GM12878 (cell line): ENCODE measurements at regions of chr17 and their contacts with region 1.

Region 1: GRCh38 chr17:40417609-40418427 is at the start of gene TOP2A:
- DNase-seq: peak; percentile 99
- ATAC-seq: peak; percentile 97
- H3K4me3 ChIP-seq: peak within 1 kb of the TSS; percentile 94
- H3K27ac ChIP-seq: peak within 1 kb of the TSS; percentile 62
- H3K4me1 ChIP-seq: no peaks in the 10 kb centered on the region; the same call in 1 of the 2 replicates
- H3K27me3 ChIP-seq: no peaks in the 10 kb centered on the region; a peak in 1 of 4 replicates
- CTCF ChIP-seq: no peak
- EP300 ChIP-seq: no peak
- POLR2A ChIP-seq: peak; percentile 91
- RAD21 ChIP-seq: no peak
- polyA plus RNA-seq, gene TOP2A: 149 to 236 TPM

Region 2: DNA sequence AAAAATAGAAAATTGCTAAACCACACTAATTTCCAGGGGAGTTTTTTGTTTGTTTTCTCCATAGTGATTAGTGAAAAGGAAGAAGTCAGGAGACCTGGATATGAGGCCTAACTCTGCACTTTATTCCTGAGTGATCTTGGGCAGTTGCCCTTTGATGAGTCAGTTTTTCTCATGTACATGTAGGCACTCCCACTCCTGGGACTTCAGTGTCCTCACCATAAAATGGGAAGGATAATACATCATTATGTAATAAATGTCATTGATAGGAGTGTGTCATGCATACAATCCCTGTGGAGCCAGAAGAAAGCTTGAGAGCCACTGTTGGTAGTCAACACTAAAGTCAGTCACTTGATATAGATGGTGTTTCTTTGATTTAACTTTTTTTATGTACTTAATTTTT is 166.2 kb before region 1 on chr17:
- CTCF ChIA-PET with region 1: no interaction called
- POLR2A ChIA-PET with region 1: no interaction called
- RAD21 ChIA-PET with region 1: no interaction called
- SMC1A ChIA-PET with region 1: no interaction called
- in situ Hi-C with region 1: no loop called
- intact Hi-C with region 1: no loop called
- DNase-seq: no peak
- ATAC-seq: no peak
- H3K4me3 ChIP-seq: no peak overlapping the region
- H3K27ac ChIP-seq: no peak overlapping the region
- H3K4me1 ChIP-seq: no peaks in the 10 kb centered on the region
- H3K27me3 ChIP-seq: no peaks in the 10 kb centered on the region
- CTCF ChIP-seq: no peak
- EP300 ChIP-seq: no peak
- POLR2A ChIP-seq: no peak
- RAD21 ChIP-seq: no peak

Region 3: DNA sequence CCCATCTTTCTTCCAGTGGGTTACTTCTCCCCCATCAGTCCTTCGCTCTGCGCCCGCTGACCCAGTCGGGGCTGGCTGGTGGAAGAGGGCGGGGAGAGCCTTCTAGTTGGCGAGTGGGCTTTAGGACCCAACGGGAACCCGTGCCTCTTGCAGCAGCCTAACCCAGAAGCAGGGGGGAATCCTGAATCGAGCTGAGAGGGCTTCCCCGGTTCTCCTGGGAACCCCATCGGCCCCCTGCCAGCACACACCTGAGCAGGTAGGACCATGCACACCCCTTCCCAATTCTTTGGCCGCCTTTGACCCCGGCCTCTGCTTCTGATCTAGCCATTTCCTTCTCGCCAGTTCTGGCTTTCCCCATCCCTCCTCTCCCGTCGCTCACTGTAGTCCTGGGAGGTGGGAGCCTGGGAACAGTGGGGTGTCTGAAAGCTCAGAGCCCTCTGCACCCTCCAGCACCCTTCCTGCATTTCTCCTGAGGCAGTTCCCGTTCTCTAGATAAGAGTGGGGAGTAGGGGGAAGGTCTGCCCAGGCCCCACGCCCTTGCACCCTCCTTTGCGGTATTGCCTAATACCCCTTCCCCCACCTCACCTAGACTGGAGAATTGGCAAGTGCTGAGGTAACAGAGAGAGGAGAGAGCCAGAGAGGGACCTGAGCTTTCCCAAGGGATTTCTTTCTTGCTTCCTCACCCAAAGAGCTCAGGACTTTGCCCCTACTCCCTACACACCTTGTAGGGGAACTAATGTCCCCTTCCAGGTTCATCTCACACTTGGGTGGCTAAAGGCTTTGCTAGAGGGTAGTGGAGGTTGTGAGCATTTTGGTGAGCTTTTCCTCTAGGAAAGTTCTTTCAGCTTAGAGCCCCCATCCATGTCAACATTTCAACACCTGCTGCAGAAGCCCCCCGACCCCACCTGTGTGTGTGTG is 108.5 kb before region 1 on chr17 and contains the start of gene RARA:
- CTCF ChIA-PET with region 1: interaction called, 22 read pairs
- POLR2A ChIA-PET with region 1: interaction called, 3 read pairs
- RAD21 ChIA-PET with region 1: interaction called, 5 read pairs
- SMC1A ChIA-PET with region 1: interaction called, 22 read pairs
- in situ Hi-C with region 1: no loop called
- intact Hi-C with region 1: loop called (anchors 10 kb)
- DNase-seq: no peak
- ATAC-seq: peak; percentile 68
- H3K4me3 ChIP-seq: peak within 1 kb of the TSS; percentile 70
- H3K27ac ChIP-seq: peak within 1 kb of the TSS; percentile 9; the same call in 1 of the 2 replicates
- H3K4me1 ChIP-seq: peaks cover 58% of the 10 kb centered on the region
- H3K27me3 ChIP-seq: no peaks in the 10 kb centered on the region
- CTCF ChIP-seq: no peak
- EP300 ChIP-seq: no peak
- POLR2A ChIP-seq: no peak
- RAD21 ChIP-seq: no peak
- polyA plus RNA-seq, gene RARA: 0.13 to 0.16 TPM

Region 4: GRCh38 chr17:40317880-40318829 is 99.7 kb before region 1 on chr17:
- CTCF ChIA-PET with region 1: interaction called, 5 read pairs
- POLR2A ChIA-PET with region 1: interaction called, 3 read pairs
- RAD21 ChIA-PET with region 1: interaction called, 4 read pairs
- SMC1A ChIA-PET with region 1: no interaction called
- in situ Hi-C with region 1: no loop called
- intact Hi-C with region 1: loop called (anchors 10 kb)
- DNase-seq: peak; percentile 79
- ATAC-seq: peak; percentile 83
- H3K4me3 ChIP-seq: peak overlapping the region; percentile 91
- H3K27ac ChIP-seq: peak overlapping the region; percentile 96
- H3K4me1 ChIP-seq: peaks cover 44% of the 10 kb centered on the region
- H3K27me3 ChIP-seq: no peaks in the 10 kb centered on the region
- CTCF ChIP-seq: no peak
- EP300 ChIP-seq: no peak; a peak in 1 of 4 replicates
- POLR2A ChIP-seq: peak; percentile 79
- RAD21 ChIP-seq: no peak

Region 5: GRCh38 chr17:40399185-40399584 is 18.6 kb before region 1 on chr17:
- CTCF ChIA-PET with region 1: interaction called, 10 read pairs
- POLR2A ChIA-PET with region 1: interaction called, 4 read pairs
- RAD21 ChIA-PET with region 1: no interaction called
- SMC1A ChIA-PET with region 1: interaction called, 49 read pairs
- in situ Hi-C with region 1: no loop called
- intact Hi-C with region 1: no loop called
- DNase-seq: no peak
- ATAC-seq: peak; percentile 68
- H3K4me3 ChIP-seq: no peak overlapping the region
- H3K27ac ChIP-seq: no peak overlapping the region
- H3K4me1 ChIP-seq: no peaks in the 10 kb centered on the region
- H3K27me3 ChIP-seq: no peaks in the 10 kb centered on the region
- CTCF ChIP-seq: peak; percentile 21 to 51 (median 44); a peak in 4 of 6 replicates
- EP300 ChIP-seq: no peak
- POLR2A ChIP-seq: no peak
- RAD21 ChIP-seq: peak; percentile 54; the same call in 1 of the 2 replicates

Region 6: GRCh38 chr17:40433551-40434415 is 16.0 kb after region 1 on chr17:
- CTCF ChIA-PET with region 1: interaction called, 10 read pairs
- POLR2A ChIA-PET with region 1: interaction called, 4 read pairs
- RAD21 ChIA-PET with region 1: interaction called, 3 read pairs
- SMC1A ChIA-PET with region 1: interaction called, 5 read pairs
- in situ Hi-C with region 1: no loop called
- intact Hi-C with region 1: no loop called
- DNase-seq: no peak
- ATAC-seq: peak; percentile 88
- H3K4me3 ChIP-seq: no peak overlapping the region
- H3K27ac ChIP-seq: no peak overlapping the region
- H3K4me1 ChIP-seq: peaks cover 3% of the 10 kb centered on the region
- H3K27me3 ChIP-seq: 0 out of 4 replicates have a peak, but pooled peaks cover 0 to 3% of the 10 kb centered on the region in 2 experiments
- CTCF ChIP-seq: peak; percentile 46 to 66 (median 62)
- EP300 ChIP-seq: no peak
- POLR2A ChIP-seq: no peak
- RAD21 ChIP-seq: peak; percentile 38; the same call in 1 of the 2 replicates

Region 7: DNA sequence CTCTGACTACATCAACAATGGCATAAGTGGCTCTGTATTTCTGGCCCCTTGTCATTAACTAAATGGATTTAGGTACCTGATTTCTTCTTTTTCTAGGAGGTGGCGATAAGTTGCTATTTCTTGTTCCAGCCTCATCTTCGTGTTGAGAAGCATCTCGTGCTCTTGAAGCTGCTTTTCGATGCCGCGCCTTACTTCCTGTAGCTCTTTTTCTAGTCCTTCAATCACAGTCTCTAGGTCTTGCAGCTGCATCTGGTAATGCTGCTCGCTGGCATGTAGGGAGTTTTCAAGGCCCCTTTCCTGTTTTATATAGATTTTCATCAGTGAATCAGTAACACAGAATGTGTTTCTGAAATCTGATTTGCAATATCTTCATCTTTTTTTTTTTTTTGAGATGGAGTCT is 242.1 kb after region 1 on chr17:
- CTCF ChIA-PET with region 1: no interaction called
- POLR2A ChIA-PET with region 1: no interaction called
- RAD21 ChIA-PET with region 1: no interaction called
- SMC1A ChIA-PET with region 1: no interaction called
- in situ Hi-C with region 1: no loop called
- intact Hi-C with region 1: no loop called
- DNase-seq: no peak
- ATAC-seq: no peak
- H3K4me3 ChIP-seq: no peak overlapping the region
- H3K27ac ChIP-seq: no peak overlapping the region
- H3K4me1 ChIP-seq: no peaks in the 10 kb centered on the region
- H3K27me3 ChIP-seq: peaks cover 1 to 13% of the 10 kb centered on the region in 2 experiments; a peak in 2 of 4 replicates
- CTCF ChIP-seq: no peak
- EP300 ChIP-seq: no peak
- POLR2A ChIP-seq: no peak
- RAD21 ChIP-seq: no peak